Endothelial cell of umbilical vein (primary cell): ENCODE measurements at regions of chr7 and their contacts with region 1.

Region 1: DNA sequence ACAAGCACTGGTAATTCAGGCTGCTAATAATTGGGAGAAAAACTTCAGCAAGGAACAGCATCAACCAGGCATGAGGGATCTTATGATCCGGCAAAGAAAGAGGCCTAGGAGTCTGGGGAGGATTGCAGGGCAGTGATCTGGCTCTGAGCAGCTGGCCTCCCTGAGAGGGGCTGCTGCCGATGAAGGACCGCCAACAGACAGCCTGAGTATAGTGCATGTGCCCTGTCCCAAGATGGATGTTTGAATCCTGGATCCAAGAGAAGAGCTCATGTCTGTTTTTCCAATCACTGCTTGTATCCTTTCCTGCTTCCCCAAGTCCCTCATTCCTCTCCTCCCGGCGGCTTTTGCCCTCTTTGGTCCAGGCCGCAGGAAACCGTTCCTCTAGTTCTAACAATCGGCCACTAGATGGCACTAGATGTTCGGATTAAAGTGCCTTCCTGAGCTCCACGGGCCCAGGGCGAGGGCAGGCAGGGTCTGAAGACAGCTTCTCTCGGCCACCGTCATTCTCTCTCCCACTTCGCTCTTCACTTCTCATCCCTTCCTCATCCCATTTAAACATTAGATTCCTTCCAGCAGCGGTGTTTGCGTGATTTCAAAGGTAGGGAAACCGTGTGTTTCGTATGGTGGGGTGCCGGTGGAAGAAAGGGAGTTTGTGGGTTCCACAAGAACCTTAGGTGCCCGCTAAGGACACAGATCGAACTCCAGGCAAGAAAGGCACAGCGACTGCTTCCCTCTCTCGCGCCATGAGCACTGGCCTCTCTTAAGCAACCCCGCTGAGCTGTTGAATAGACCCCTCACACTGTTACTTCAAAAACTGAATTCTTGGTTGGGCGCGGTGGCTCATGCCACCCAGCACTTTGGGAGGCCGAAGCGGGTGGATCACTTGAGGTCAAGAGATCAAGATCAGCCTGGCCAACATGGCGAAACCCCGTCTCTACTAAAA is 82.4 kb downstream of the ADCYAP1R1 start:
- DNase-seq: peak; percentile 58
- H3K4me3 ChIP-seq: no peak overlapping the region
- H3K27ac ChIP-seq: no peak overlapping the region
- H3K4me1 ChIP-seq: no peaks in the 10 kb centered on the region
- H3K27me3 ChIP-seq: no peaks in the 10 kb centered on the region
- CTCF ChIP-seq: peak; percentile 64 to 72
- POLR2A ChIP-seq: no peak

Region 2: DNA sequence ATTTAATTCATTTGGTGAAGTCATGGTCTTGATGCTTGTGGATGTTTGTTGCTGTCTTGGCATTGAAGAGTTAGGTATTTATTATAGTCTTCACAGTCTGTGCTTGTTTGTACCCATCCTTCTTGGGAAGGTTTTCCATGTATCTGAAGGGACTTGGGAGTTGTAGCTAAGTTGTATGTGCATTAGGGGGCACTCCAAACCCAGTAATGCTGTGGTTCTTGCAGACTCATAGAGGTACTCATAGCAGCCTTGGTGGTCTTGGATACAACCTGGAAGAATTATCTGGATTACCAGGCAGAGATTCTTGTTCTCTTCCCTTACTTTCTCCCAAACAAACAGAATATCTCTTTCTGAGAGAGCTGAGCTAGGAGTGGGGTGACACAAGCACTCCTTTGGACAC is 10.8 kb after region 1 on chr7:
- CTCF ChIA-PET with region 1: interaction called, 12 read pairs
- POLR2A ChIA-PET with region 1: no interaction called
- dilution Hi-C with region 1: no loop called
- intact Hi-C with region 1: no loop called
- DNase-seq: no peak
- H3K4me3 ChIP-seq: no peak overlapping the region
- H3K27ac ChIP-seq: no peak overlapping the region
- H3K4me1 ChIP-seq: no peaks in the 10 kb centered on the region
- H3K27me3 ChIP-seq: no peaks in the 10 kb centered on the region
- CTCF ChIP-seq: no peak
- POLR2A ChIP-seq: no peak

Region 3: GRCh38 chr7:31419505-31420055 is 285.1 kb after region 1 on chr7:
- CTCF ChIA-PET with region 1: no interaction called
- POLR2A ChIA-PET with region 1: no interaction called
- dilution Hi-C with region 1: no loop called
- intact Hi-C with region 1: no loop called
- DNase-seq: no peak
- H3K4me3 ChIP-seq: no peak overlapping the region
- H3K27ac ChIP-seq: no peak overlapping the region
- H3K4me1 ChIP-seq: no peaks in the 10 kb centered on the region
- H3K27me3 ChIP-seq: no peaks in the 10 kb centered on the region
- CTCF ChIP-seq: no peak
- POLR2A ChIP-seq: no peak

Region 4: GRCh38 chr7:31488562-31489203 is 354.2 kb after region 1 on chr7:
- CTCF ChIA-PET with region 1: interaction called, 25 read pairs
- POLR2A ChIA-PET with region 1: no interaction called
- dilution Hi-C with region 1: no loop called
- intact Hi-C with region 1: loop called (anchors 1 kb)
- DNase-seq: peak; percentile 29
- H3K4me3 ChIP-seq: no peak overlapping the region
- H3K27ac ChIP-seq: no peak overlapping the region
- H3K4me1 ChIP-seq: no peaks in the 10 kb centered on the region
- H3K27me3 ChIP-seq: no peaks in the 10 kb centered on the region
- CTCF ChIP-seq: peak; percentile 58 to 78
- POLR2A ChIP-seq: no peak

Region 5: GRCh38 chr7:31633894-31634494 is 499.5 kb after region 1 on chr7:
- CTCF ChIA-PET with region 1: interaction called, 74 read pairs
- POLR2A ChIA-PET with region 1: no interaction called
- dilution Hi-C with region 1: no loop called
- intact Hi-C with region 1: loop called (anchors 1 kb)
- DNase-seq: peak; percentile 44
- H3K4me3 ChIP-seq: no peak overlapping the region
- H3K27ac ChIP-seq: no peak overlapping the region
- H3K4me1 ChIP-seq: no peaks in the 10 kb centered on the region
- H3K27me3 ChIP-seq: no peaks in the 10 kb centered on the region
- CTCF ChIP-seq: peak; percentile 26 to 43
- POLR2A ChIP-seq: no peak